ENCODE measurements at regions of chr19 and their contacts with region 1.

Region 1: DNA sequence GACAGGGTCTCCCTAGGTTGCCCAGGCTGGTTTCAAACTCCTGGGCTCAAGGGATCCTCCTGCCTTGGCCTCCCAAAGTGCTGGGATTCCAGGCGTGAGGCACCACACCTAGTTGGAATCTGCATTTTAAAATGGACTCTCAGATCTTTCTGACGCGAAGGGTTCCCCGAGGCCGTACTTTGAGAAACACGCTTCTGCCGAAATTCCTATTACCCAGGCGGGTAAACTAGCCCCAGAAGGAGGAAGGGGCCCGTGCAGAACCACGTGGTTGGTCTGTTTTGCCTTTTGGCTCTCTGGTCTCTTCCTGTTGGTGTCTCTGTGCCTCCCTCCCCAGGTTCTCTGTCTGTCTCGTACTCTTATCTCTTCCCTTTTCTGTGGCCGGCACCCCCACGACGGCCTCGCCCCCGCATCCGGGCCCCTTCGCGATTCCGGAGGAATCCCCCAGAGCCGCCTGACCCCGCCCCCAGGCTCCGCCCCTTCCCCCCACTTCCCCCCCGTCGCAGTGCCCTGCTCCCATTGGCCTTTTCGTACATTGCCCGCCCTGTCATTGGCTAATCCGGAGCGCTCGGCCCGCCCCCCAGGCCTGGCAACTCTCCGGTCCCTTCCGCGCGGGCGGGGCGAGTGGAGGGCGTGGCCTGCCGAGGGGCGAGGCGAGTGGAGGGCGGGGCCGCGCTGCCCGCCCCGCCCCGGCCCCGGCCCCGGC is at the start of gene TNFAIP8L1:
- DNase-seq: peak; percentile 99
- ATAC-seq: peak; percentile 90
- H3K4me3 Mint-ChIP-seq: peak within 1 kb of the TSS; percentile 95
- H3K27ac Mint-ChIP-seq: peak within 1 kb of the TSS; percentile 41; the same call in 1 of the 2 replicates
- H3K4me1 Mint-ChIP-seq: peaks cover 16% of the 10 kb centered on the region
- H3K27me3 Mint-ChIP-seq: peaks cover 39% of the 10 kb centered on the region
- CTCF ChIP-seq: no peak
- total RNA-seq, gene TNFAIP8L1: 8.3 to 8.7 TPM (median 8.6 TPM) in 3 replicates

Region 2: GRCh38 chr19:4518345-4519171 is 120.4 kb before region 1 on chr19 and contains the start of gene PLIN4:
- CTCF ChIA-PET with region 1: interaction called, 85 read pairs
- POLR2A ChIA-PET with region 1: no interaction called
- DNase-seq: peak; percentile 34
- ATAC-seq: peak; percentile 50
- H3K4me3 Mint-ChIP-seq: no peak within 1 kb of the TSS
- H3K27ac Mint-ChIP-seq: no peak within 1 kb of the TSS
- H3K4me1 Mint-ChIP-seq: no peaks in the 10 kb centered on the region
- H3K27me3 Mint-ChIP-seq: peaks cover 78% of the 10 kb centered on the region
- CTCF ChIP-seq: no peak
- total RNA-seq, gene PLIN4: 0.35 to 0.62 TPM (median 0.57 TPM) in 3 replicates

Region 3: GRCh38 chr19:4534836-4535658 is 103.9 kb before region 1 on chr19 and contains the start of gene PLIN5:
- CTCF ChIA-PET with region 1: interaction called, 33 read pairs
- POLR2A ChIA-PET with region 1: no interaction called
- DNase-seq: peak; percentile 97
- ATAC-seq: peak; percentile 93
- H3K4me3 Mint-ChIP-seq: peak within 1 kb of the TSS; percentile 53
- H3K27ac Mint-ChIP-seq: no peak within 1 kb of the TSS
- H3K4me1 Mint-ChIP-seq: peaks cover 3% of the 10 kb centered on the region; the same call in 1 of the 2 replicates
- H3K27me3 Mint-ChIP-seq: peaks cover 60% of the 10 kb centered on the region
- CTCF ChIP-seq: no peak
- total RNA-seq, gene PLIN5: 3.3 to 4.2 TPM (median 3.9 TPM) in 3 replicates

Region 4: GRCh38 chr19:4576016-4576933 is 62.7 kb before region 1 on chr19:
- CTCF ChIA-PET with region 1: interaction called, 217 read pairs
- POLR2A ChIA-PET with region 1: interaction called, 6 read pairs
- DNase-seq: peak; percentile 89
- ATAC-seq: peak; percentile 23
- H3K4me3 Mint-ChIP-seq: peak overlapping the region; percentile 28; the same call in 1 of the 2 replicates
- H3K27ac Mint-ChIP-seq: peak overlapping the region; percentile 78; the same call in 1 of the 2 replicates
- H3K4me1 Mint-ChIP-seq: peaks cover 25% of the 10 kb centered on the region
- H3K27me3 Mint-ChIP-seq: peaks cover 4% of the 10 kb centered on the region
- CTCF ChIP-seq: peak; percentile 74

Region 5: GRCh38 chr19:4589579-4590410 is 49.2 kb before region 1 on chr19:
- CTCF ChIA-PET with region 1: interaction called, 22 read pairs
- POLR2A ChIA-PET with region 1: interaction called, 3 read pairs
- DNase-seq: no peak
- ATAC-seq: no peak
- H3K4me3 Mint-ChIP-seq: no peak overlapping the region
- H3K27ac Mint-ChIP-seq: peak overlapping the region; percentile 47; the same call in 1 of the 2 replicates
- H3K4me1 Mint-ChIP-seq: peaks cover 21% of the 10 kb centered on the region
- H3K27me3 Mint-ChIP-seq: peaks cover 60% of the 10 kb centered on the region
- CTCF ChIP-seq: no peak

Region 6: DNA sequence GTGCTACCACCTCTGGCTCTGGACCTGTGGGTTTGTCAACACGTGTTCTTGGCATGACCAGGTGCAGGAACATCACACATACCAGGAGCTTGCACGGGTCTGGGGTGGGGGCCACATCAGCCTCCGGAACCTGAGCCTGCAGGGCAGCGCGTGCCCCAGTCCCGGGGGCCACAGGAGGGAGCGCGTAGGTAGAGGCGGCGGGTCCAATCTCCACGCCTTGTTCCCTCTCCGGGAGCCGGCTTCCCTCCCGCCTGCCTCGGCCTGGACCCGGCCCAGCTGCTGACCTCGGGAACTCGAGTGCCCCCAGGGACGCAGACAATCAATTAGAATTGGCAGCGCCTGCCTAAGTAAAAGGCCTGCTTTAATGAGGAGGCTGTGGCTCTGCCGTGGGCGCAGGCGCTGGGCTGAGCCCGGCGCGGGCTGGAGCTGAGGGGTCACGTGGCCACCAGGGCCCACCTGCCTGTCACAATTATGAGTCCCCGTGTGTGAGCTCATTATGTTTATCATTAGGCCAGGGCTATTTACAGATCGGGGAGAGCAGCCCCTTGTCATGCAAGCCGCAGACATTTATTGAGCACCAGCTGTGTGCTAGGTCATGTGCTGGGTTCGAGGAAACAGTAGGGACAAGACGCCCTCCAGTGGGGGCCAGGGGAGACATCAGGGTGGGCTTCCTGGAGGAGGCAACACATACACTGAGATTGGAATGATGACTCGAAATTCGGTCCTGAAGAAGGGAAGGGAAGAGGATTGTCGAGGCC is 31.9 kb before region 1 on chr19:
- CTCF ChIA-PET with region 1: interaction called, 11 read pairs
- POLR2A ChIA-PET with region 1: no interaction called
- DNase-seq: peak; percentile 53
- ATAC-seq: peak; percentile 71
- H3K4me3 Mint-ChIP-seq: peak overlapping the region; percentile 27
- H3K27ac Mint-ChIP-seq: no peak overlapping the region
- H3K4me1 Mint-ChIP-seq: peaks cover 15% of the 10 kb centered on the region
- H3K27me3 Mint-ChIP-seq: peaks cover 30% of the 10 kb centered on the region
- CTCF ChIP-seq: no peak

Region 7: GRCh38 chr19:4624733-4625362 is 14.1 kb before region 1 on chr19:
- CTCF ChIA-PET with region 1: interaction called, 46 read pairs
- POLR2A ChIA-PET with region 1: no interaction called
- DNase-seq: peak; percentile 62
- ATAC-seq: peak; percentile 71
- H3K4me3 Mint-ChIP-seq: no peak overlapping the region
- H3K27ac Mint-ChIP-seq: no peak overlapping the region; the same call in 1 of the 2 replicates
- H3K4me1 Mint-ChIP-seq: peaks cover 12% of the 10 kb centered on the region
- H3K27me3 Mint-ChIP-seq: peaks cover 5% of the 10 kb centered on the region
- CTCF ChIP-seq: no peak; the same call in 1 of the 2 replicates